Left colon (tissue), 2 donors: ENCODE measurements at regions of chr2 and their contacts with region 1.

Region 1: DNA sequence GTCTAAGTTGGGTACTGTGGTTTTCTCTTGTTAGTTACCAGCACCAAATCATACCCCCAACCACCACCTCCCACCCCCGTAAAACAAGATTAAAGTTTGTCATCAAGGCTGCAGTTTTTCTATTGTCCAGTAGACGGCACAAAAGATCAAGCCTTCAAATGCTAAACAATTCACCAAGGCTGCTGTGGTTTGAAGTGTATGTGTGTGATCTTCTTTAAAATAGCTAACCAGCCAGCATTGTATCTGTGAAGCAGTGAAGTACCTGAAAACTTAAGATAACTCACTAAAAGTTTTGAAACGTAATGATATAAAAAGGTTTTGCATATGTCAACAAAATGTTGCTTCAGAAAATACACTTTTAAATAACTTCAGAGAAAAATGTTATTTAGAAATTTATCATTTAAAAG is 5.9 kb upstream of the MEIS1 start:
- DNase-seq: no peak
- ATAC-seq: peak; percentile 35

Region 2: GRCh38 chr2:65647249-65647842 is 781.7 kb before region 1 on chr2:
- intact Hi-C with region 1: loop called in 1 of 2 experiments (anchors 10 kb)
- DNase-seq: no peak
- ATAC-seq: no peak

Region 3: GRCh38 chr2:67650291-67651133 is 1221.4 kb after region 1 on chr2:
- intact Hi-C with region 1: loop called in 1 of 2 experiments (anchors 5 kb)
- DNase-seq: peak; percentile 42 to 63
- ATAC-seq: peak; percentile 60